Naive thymus-derived CD8-positive, alpha-beta T cell (primary cell): ENCODE measurements at regions of chr5 and their contacts with region 1.

Region 1: DNA sequence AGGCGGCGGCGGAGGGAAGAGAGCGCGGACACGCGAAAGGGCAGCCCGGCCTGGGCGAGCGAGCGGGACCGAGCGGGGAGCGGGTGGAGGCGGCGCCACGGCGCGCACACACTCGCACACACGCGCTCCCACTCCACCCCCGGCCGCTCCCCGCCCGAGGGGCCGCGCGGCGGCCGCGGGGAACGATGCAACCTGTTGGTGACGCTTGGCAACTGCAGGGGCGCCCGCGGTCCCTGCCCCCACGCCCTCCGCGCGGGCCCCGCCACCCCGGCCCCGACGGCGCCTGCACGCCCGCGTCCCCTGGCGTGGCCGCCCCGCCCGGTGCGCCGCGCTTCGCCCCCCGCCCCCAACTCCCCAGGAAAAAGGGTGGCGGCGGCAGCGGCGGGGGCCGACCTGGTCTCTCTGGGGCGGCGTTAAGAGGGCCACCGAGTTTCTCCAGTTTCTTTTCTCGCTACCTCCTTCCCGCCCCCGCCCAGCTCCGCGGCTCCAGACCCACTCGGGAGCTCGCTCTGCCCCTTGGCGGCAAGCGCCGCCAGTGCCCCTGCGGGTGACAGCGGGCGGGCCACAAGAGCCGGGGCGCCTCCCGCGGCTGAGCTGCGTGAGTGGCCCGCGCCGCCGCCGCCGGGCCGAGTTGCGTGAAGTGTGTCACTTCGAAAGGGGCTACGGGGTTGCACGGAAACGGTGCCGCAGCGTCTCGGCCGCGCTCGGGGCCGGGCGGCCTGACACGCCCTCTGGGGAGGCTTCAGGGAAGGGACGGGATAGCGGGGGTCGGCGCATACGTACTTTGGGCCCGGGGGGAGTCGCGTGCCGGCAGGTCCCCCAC is at the start of gene NR3C1:
- DNase-seq: peak; percentile 81 to 92 (median 88)
- ATAC-seq: peak; percentile 64 to 70
- H3K4me3 Mint-ChIP-seq: peak within 1 kb of the TSS; percentile 92 to 98 (median 96)
- H3K27ac Mint-ChIP-seq: peak within 1 kb of the TSS; percentile 98 to 99 (median 99)
- H3K4me1 Mint-ChIP-seq: peaks cover 18 to 43% (median 41%) of the 10 kb centered on the region in 4 donors
- H3K27me3 Mint-ChIP-seq: no peaks in the 10 kb centered on the region
- polyA plus RNA-seq, gene NR3C1: 60.2 to 83.9 (median 67.1) TPM

Region 2: DNA sequence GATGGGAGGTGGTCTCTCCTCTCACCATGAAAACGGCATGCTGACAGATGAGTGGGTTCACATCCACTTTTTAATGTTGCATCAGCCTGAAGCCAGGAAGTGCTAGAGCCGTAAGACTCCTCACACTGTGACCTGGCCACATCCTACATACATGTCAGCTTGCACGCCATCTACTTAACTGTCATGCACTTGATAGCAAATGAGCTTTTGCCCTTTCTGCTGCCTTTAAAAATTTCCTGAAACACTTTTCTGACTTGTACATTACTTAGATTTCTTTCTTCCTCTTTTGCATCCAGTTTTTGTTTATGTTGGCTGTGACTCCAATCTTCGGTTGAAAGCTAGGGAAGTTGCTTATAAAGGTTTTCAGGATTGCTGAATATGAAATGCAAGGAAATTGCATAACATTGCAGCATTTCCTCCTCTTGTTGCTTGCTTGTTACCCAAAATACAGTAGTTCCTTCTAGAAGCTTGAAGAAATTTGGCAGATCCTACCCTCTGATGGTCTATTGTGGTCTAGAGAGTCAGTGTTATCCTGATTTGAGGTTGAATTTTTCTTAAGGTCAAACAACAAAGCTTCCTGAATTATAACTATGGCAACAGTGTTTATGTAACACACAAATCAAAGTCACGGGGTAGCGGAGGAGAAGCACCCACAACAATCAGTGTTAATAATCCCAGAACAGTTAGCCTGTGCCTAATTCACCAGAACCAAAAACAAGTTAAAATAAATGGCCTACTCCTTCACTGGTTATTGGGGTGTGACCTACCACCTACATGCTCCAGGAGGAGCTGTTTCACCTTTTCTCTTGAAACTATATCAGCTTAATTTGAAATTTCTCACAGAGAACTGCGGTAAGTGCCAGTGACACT is 401.1 kb before region 1 on chr5:
- POLR2A ChIA-PET with region 1: interaction called, 61 read pairs
- DNase-seq: peak in 9 of 10 donors; percentile 4 to 84 (median 59)
- ATAC-seq: peak; percentile 88 to 92
- H3K4me3 Mint-ChIP-seq: peak overlapping the region in 9 of 10 donors; percentile 5 to 76 (median 52)
- H3K27ac Mint-ChIP-seq: peak overlapping the region; percentile 83 to 98 (median 94)
- H3K4me1 Mint-ChIP-seq: peaks cover 29 to 90% (median 48%) of the 10 kb centered on the region in 4 donors
- H3K27me3 Mint-ChIP-seq: no peaks in the 10 kb centered on the region

Region 3: DNA sequence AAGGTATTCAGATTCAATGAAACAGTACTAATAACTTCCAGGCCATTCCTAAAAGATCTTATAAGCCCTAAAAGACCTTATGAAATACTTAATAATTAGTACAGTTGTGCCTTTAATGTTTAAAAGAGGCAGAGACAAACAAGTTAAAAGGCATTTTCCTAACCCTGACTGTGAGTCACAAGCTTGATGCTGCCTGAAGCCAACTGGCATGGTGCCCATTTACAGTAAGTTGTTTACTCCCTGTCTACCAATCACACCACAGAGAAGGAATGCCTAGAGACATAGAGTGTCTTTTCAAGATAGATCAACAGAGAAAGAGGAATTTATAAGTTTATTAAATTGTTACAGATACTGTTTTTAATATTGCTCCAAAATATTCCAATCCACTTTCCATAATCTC is 48.1 kb before region 1 on chr5:
- POLR2A ChIA-PET with region 1: interaction called, 14 read pairs
- DNase-seq: peak; percentile 30 to 78 (median 56)
- ATAC-seq: peak; percentile 79 to 88
- H3K4me3 Mint-ChIP-seq: peak overlapping the region in 5 of 10 donors; percentile 5 to 66 (median 31)
- H3K27ac Mint-ChIP-seq: peak overlapping the region in 9 of 10 donors; percentile 48 to 95 (median 68)
- H3K4me1 Mint-ChIP-seq: peaks cover 35 to 86% (median 73%) of the 10 kb centered on the region in 4 donors
- H3K27me3 Mint-ChIP-seq: no peaks in the 10 kb centered on the region

Region 4: DNA sequence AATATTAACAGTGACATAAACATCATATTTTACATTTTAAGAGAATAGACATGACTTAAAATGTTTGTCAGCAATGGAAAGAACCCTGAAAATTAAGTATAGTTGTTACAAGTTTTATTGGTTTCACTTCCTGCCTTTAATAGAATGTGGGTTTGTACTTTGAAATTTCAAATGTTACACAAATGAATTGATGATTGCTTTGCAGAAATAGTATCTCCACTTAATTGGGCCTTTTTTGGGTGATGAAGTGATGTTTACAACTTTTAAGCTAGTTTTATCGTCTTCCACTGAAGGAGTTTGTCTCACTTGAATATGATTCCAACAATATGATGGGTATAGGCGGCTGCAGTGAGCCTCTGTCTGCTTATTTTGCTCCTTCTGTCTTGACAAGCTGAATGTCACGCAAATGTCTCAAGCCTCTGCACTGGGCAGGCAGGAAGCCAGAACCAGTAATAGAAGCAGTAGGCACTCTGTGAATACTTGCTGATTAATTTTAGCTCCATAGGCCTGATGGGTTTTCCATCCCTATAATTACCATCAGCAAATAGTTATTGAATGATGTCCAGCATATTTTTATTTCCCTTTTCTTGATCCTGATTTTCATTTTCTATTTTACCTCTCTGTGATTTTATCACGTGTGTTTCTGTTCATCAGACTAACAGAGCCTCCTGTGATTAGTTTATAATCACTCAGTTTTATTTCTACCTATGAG is 10.3 kb after region 1 on chr5:
- POLR2A ChIA-PET with region 1: interaction called, 17 read pairs
- DNase-seq: no peak
- ATAC-seq: no peak
- H3K4me3 Mint-ChIP-seq: no peak overlapping the region
- H3K27ac Mint-ChIP-seq: peak overlapping the region in 1 of 10 donors; percentile 71
- H3K4me1 Mint-ChIP-seq: peaks cover 0 to 25% (median under 1%) of the 10 kb centered on the region in 4 donors
- H3K27me3 Mint-ChIP-seq: peaks cover 0 to 2% (median 0%) of the 10 kb centered on the region in 5 donors

Region 5: DNA sequence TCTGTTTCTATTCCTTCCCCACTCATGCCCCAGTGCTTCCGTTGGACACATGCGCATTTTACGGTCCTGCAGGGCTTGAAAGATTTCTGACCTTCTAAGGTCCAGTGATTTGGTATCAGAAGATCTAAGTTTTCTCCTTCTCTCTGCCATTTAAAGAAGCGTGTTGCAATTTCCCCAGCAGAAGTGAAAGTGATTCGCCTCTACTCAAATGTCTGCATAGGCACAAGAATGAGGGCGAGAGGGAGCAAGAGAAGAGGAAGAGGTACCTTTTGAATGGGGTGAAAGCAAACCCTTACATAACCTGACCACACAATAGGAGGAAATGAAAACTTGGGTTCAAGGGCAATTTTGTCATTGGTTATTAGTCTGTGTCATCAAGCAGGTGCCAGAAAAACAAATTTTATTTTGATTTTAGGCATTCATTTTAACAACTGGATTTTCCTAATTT is 31.4 kb after region 1 on chr5:
- POLR2A ChIA-PET with region 1: interaction called, 190 read pairs
- DNase-seq: peak in 9 of 10 donors; percentile 4 to 68 (median 53)
- ATAC-seq: peak; percentile 65 to 77
- H3K4me3 Mint-ChIP-seq: peak overlapping the region; percentile 92 to 98 (median 95)
- H3K27ac Mint-ChIP-seq: peak overlapping the region; percentile 96 to 99 (median 98)
- H3K4me1 Mint-ChIP-seq: peaks cover 36 to 66% (median 61%) of the 10 kb centered on the region in 4 donors
- H3K27me3 Mint-ChIP-seq: no peaks in the 10 kb centered on the region

Region 6: GRCh38 chr5:144170276-144171024 is 766.6 kb after region 1 on chr5 and contains the starts of genes KCTD16 and YIPF5:
- POLR2A ChIA-PET with region 1: interaction called, 17 read pairs
- DNase-seq: peak; percentile 90 to 99 (median 97)
- ATAC-seq: peak; percentile 95 to 97
- H3K4me3 Mint-ChIP-seq: peak within 1 kb of the TSS; percentile 89 to 98 (median 92)
- H3K27ac Mint-ChIP-seq: peak within 1 kb of the TSS; percentile 90 to 99 (median 95)
- H3K4me1 Mint-ChIP-seq: peaks cover 16 to 48% (median 42%) of the 10 kb centered on the region in 4 donors
- H3K27me3 Mint-ChIP-seq: peaks cover 0 to 6% (median 1%) of the 10 kb centered on the region in 5 donors
- polyA plus RNA-seq, gene KCTD16: not detected
- polyA plus RNA-seq, gene YIPF5: 53.4 to 62.2 (median 55.5) TPM

Region 7: GRCh38 chr5:144191998-144192397 is 788.2 kb after region 1 on chr5:
- POLR2A ChIA-PET with region 1: interaction called, 37 read pairs
- DNase-seq: peak in 9 of 10 donors; percentile 21 to 86 (median 73)
- ATAC-seq: peak; percentile 38 to 65
- H3K4me3 Mint-ChIP-seq: no peak overlapping the region
- H3K27ac Mint-ChIP-seq: no peak overlapping the region
- H3K4me1 Mint-ChIP-seq: peaks cover 23 to 44% (median 34%) of the 10 kb centered on the region in 4 donors
- H3K27me3 Mint-ChIP-seq: no peaks in the 10 kb centered on the region